SK-N-SH (cell line): ENCODE measurements at regions of chr12 and their contacts with region 1.

Region 1: GRCh38 chr12:66235626-66236281 is 46.7 kb downstream of the IRAK3 start:
- DNase-seq: peak; percentile 22
- H3K4me3 ChIP-seq: peak overlapping the region; percentile 50 to 57; a peak in 3 of 4 replicates
- H3K27ac ChIP-seq: no peak overlapping the region; a peak in 1 of 4 replicates
- H3K4me1 ChIP-seq: peaks cover 0 to 4% of the 10 kb centered on the region in 2 experiments; a peak in 1 of 4 replicates
- H3K27me3 ChIP-seq: peaks cover 11% of the 10 kb centered on the region; the same call in 1 of the 2 replicates
- CTCF ChIP-seq: peak; percentile 37
- EP300 ChIP-seq: no peak
- RAD21 ChIP-seq: no peak

Region 2: DNA sequence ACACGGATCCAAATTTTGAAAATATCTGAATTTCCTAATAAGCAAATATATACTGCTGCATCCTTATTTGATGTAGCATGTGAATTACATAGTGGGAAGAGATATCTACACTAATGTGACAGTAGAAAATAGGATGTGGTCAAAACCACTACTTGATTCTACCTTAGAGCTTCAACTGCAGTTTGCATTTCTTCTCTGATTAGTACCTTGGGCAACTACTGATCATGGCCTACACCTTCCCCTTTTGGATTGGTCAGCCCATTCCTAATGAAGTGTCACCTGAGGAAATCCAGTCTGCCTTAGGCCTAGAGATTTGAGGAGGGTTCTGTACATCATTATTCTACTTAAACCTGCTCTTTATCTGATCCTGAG is 115.9 kb before region 1 on chr12:
- CTCF ChIA-PET with region 1: no interaction called
- POLR2A ChIA-PET with region 1: no interaction called
- DNase-seq: no peak
- H3K4me3 ChIP-seq: no peak overlapping the region
- H3K27ac ChIP-seq: no peak overlapping the region
- H3K4me1 ChIP-seq: no peaks in the 10 kb centered on the region
- H3K27me3 ChIP-seq: no peaks in the 10 kb centered on the region
- CTCF ChIP-seq: no peak
- EP300 ChIP-seq: no peak
- RAD21 ChIP-seq: no peak

Region 3: GRCh38 chr12:66169221-66170170 is 66.3 kb before region 1 on chr12 and contains the start of gene TMBIM4:
- CTCF ChIA-PET with region 1: interaction called, 19 read pairs
- POLR2A ChIA-PET with region 1: interaction called, 8 read pairs
- DNase-seq: peak; percentile 94
- H3K4me3 ChIP-seq: peak within 1 kb of the TSS; percentile 66 to 69
- H3K27ac ChIP-seq: peak within 1 kb of the TSS; percentile 98 to 99
- H3K4me1 ChIP-seq: peaks cover 4 to 6% of the 10 kb centered on the region in 2 experiments; a peak in 3 of 4 replicates
- H3K27me3 ChIP-seq: no peaks in the 10 kb centered on the region
- CTCF ChIP-seq: peak; percentile 64
- EP300 ChIP-seq: no peak
- RAD21 ChIP-seq: peak; percentile 36; the same call in 1 of the 2 replicates
- polyA plus RNA-seq, gene TMBIM4: 68.5 and 94.6 TPM in 2 replicates